HEK293T (cell line): ENCODE measurements at regions of chr16 and their contacts with region 1.

Region 1: GRCh38 chr16:56931892-56932720 is at the start of gene HERPUD1:
- DNase-seq: peak; percentile 99

Region 2: GRCh38 chr16:56862776-56863175 is 69.3 kb before region 1 on chr16:
- CTCF ChIA-PET with region 1: no interaction called
- POLR2A ChIA-PET with region 1: interaction called, 12 read pairs
- DNase-seq: no peak

Region 3: GRCh38 chr16:56910654-56911539 is 21.2 kb before region 1 on chr16:
- CTCF ChIA-PET with region 1: no interaction called
- POLR2A ChIA-PET with region 1: interaction called, 15 read pairs
- DNase-seq: no peak

Region 4: DNA sequence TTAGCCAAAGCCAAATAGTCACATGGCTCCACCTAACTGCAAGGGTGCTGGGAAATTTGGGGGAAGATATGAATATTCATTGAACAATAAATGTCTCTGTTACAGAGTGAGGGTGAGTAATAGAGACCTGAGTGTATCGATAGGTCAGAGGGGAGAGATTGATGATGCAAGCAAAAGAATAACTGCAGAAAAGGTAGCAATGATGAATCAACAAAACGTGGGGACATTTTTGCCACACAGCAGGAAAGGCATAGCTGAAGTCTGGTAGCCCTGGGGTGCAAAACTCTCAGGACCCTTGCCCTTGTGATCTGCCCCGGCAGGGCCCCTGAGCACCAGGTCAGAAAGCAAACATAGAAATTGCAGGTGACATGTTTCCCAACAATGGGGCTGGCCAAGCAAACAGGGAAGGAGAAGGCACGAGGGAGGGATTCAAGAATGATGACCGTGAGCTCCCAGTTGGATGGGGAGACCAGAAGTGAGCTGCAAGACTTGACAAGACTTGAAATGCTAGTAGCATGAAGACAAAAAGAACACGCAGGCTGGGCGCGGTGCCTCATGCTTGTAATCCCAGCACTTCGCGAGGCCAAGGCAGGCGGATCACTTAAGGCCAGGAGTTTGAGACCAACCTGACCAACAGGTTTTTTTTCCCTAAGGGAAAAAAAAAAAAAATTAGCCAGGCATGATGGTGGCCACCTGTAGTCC is 12.9 kb before region 1 on chr16:
- CTCF ChIA-PET with region 1: no interaction called
- POLR2A ChIA-PET with region 1: interaction called, 24 read pairs
- DNase-seq: no peak